Activated naive CD4-positive, alpha-beta T cell treated with anti-CD3 and anti-CD28 coated beads for 36 hours (primary cell): ENCODE measurements at regions of chr4 and their contacts with region 1.

Region 1: DNA sequence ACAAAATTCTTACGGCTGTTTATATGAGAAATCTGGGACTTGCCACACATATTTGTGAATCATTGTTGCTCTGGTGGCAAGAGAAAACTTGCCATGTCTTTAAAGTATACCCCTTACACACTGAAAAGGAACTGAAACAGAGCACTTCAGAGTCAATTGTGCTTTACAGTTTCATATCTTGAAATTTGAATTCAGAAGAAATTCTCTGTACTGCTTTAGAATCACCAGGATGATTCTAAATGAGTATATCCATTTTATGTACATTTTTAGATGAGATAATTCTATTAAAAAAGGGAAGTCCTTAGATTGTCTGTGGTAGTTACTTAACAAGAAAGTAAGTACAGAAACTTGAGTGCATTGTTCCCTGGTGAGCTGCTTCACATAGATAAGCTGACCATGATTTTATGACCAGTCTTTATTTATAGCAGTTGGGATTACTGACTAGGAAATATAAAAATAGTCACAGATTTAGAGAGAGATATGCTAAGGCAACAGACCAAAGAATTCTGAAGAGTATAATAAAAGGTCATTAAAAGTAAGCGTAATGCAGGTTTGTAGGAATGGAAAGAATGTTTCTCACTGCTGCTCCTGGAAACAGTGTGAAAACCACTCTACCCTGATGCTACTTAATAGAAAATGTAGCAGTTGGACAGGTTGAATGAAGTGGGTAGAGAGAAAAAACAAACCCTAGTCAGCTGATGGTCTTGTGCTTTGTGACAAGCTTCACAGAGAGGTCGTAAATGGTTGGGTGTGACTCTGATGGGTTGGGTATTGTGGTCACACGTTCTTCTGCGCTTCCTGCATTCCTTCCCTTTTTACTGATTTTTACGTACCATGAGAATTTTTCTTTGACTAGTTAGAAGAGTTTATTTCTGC is 41.0 kb downstream of the FNIP2 start:
- DNase-seq: peak; percentile 18
- H3K4me3 Mint-ChIP-seq: peak overlapping the region; percentile 46
- H3K27ac Mint-ChIP-seq: peak overlapping the region; percentile 42
- H3K4me1 Mint-ChIP-seq: peaks cover 40% of the 10 kb centered on the region
- H3K27me3 Mint-ChIP-seq: no peaks in the 10 kb centered on the region

Region 2: GRCh38 chr4:158722917-158723793 is 86.7 kb before region 1 on chr4 and contains the start of gene PPID:
- CTCF ChIA-PET with region 1: interaction called, 4 read pairs
- intact Hi-C with region 1: loop called (anchors 1 kb)
- DNase-seq: peak; percentile 88
- H3K4me3 Mint-ChIP-seq: peak within 1 kb of the TSS; percentile 98
- H3K27ac Mint-ChIP-seq: peak within 1 kb of the TSS; percentile 99
- H3K4me1 Mint-ChIP-seq: peaks cover 41% of the 10 kb centered on the region
- H3K27me3 Mint-ChIP-seq: no peaks in the 10 kb centered on the region
- total RNA-seq, gene PPID: 55.4 to 55.6 TPM

Region 3: DNA sequence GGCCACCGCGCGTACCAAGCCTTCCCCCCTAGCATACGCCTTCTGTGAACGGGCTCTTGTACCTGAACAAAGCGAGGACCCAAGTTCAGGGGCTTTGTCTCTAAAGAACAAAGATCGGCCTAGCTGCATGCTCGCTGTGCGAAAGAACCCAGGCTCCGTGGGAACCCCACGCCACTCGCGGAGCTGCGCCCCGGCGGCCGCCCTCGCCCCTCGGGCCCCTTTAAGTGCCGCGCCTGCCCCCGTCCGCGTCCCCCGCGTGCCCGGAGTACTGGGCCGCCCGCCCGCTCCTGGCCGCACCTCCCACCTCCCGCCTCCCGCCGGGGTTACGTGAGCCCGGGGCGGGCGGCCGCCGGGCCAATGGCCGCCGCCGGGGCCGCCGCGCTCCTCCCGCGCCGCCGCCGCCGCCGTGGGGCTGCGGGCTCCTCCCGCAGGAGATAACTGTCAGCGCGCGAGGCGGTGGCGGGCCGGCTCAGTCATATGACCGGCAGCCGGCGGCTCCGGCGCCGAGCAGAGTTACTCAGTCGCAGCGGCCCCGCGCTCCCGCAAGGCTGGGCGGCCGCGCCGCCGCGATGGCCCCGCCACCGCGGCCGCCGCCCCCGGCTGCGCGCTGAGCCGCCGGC is 41.2 kb before region 1 on chr4 and contains the start of gene FNIP2:
- CTCF ChIA-PET with region 1: interaction called, 3 read pairs
- intact Hi-C with region 1: loop called (anchors 1 kb)
- DNase-seq: peak; percentile 73
- H3K4me3 Mint-ChIP-seq: peak within 1 kb of the TSS; percentile 96
- H3K27ac Mint-ChIP-seq: peak within 1 kb of the TSS; percentile 90
- H3K4me1 Mint-ChIP-seq: peaks cover 39% of the 10 kb centered on the region
- H3K27me3 Mint-ChIP-seq: no peaks in the 10 kb centered on the region
- total RNA-seq, gene FNIP2: 10.1 to 11.3 TPM

Region 4: DNA sequence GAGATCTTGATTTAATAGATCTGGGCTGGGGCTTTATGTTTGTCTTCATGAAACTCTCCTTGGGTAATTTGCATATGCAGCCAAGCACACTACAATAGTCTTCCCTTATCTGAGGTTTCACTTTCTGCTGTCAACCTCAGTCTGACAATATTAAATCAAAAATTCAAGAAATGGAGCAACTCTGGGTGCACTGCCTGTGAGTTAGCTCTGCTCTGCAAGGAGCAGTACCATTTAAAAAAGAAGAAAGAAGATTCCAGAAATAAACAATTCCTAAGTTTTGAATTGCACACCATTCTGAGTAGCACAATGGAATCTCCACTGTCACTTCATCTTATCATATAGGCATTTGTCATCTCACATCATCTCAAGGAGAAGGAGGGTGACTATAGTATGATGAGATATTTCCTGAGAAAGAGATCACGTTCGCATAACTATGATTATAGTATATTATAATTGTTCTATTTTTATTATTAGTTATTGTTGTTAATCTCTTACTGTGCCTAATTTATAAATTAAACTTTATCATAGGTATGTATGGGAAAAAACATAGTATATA is 31.6 kb before region 1 on chr4:
- CTCF ChIA-PET with region 1: no interaction called
- intact Hi-C with region 1: loop called (anchors 1 kb)
- DNase-seq: no peak
- H3K4me3 Mint-ChIP-seq: peak overlapping the region; percentile 27
- H3K27ac Mint-ChIP-seq: peak overlapping the region; percentile 31
- H3K4me1 Mint-ChIP-seq: peaks cover 31% of the 10 kb centered on the region
- H3K27me3 Mint-ChIP-seq: no peaks in the 10 kb centered on the region

Region 5: DNA sequence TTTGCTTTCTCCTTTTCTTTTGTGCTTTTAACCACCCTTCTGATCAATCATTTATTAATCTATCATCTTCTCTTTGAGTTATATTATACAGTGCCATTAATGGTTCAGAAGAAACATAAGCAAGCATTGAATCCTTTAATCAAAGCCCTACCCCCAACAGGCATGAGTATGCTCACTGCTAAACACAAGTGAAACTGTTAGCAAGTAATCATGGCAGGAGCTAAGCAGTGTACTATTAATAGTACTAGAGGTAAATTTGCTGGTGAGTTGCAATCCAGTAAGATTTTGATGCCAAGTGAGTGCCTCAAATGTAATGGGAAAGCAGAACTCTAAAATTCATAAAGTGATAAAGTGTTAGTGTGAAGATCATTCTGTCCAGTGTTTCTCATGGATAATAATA is 16.2 kb after region 1 on chr4:
- CTCF ChIA-PET with region 1: interaction called, 7 read pairs
- intact Hi-C with region 1: loop called (anchors 1 kb)
- DNase-seq: no peak
- H3K4me3 Mint-ChIP-seq: no peak overlapping the region
- H3K27ac Mint-ChIP-seq: peak overlapping the region; percentile 59
- H3K4me1 Mint-ChIP-seq: peaks cover 55% of the 10 kb centered on the region
- H3K27me3 Mint-ChIP-seq: no peaks in the 10 kb centered on the region

Region 6: GRCh38 chr4:159102622-159103383 is 293.0 kb after region 1 on chr4 and contains the start of gene RAPGEF2:
- CTCF ChIA-PET with region 1: no interaction called
- intact Hi-C with region 1: loop called (anchors 5 kb)
- DNase-seq: peak; percentile 91
- H3K4me3 Mint-ChIP-seq: peak within 1 kb of the TSS; percentile 80
- H3K27ac Mint-ChIP-seq: peak within 1 kb of the TSS; percentile 88
- H3K4me1 Mint-ChIP-seq: peaks cover 47% of the 10 kb centered on the region
- H3K27me3 Mint-ChIP-seq: no peaks in the 10 kb centered on the region
- total RNA-seq, gene RAPGEF2: 21.2 to 26.1 TPM